MCF 10A (cell line): ENCODE measurements at regions of chr2 and their contacts with region 1.

Region 1: DNA sequence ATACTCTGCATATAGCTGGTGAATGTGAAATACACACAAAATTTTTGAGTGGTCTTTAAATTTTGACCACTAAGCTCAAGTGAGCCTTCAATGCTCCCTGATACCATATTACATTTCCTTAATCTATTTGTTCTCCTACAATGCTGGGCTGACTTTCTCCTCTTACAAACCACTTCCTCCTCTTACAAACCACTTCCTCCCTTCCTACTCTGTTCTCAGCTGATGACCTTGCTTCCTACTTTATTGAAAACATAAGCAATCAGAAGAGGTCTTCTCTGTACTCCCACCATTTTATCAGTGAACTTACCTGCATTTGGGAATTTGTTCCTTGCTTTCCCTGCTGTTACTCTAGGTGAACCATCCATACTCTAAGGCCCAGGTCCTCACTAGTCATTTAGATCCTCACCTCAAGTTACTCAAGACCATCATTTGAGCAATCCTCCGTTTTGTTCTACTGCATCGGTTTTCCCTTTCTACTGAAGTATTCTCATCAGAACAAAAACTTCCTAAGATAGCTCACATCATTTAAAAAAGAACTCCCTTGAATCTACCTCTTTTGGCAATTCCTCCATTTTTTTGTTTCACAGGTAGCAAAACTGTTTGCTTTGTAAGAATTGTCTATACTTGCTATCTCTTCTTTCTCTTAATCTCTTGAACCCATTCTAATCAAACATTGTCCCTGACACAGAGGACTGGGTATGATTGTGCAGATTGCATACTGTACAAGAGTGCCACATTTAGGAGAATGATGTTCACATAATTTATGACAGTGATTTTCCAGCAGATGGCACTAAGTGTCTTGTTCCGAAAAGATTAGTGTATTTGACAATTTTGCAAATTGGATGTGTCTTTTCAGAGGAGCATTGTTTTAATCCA is 96.5 kb downstream of the EPB41L5 start:
- DNase-seq: peak; percentile 65
- H3K4me3 Mint-ChIP-seq: peak overlapping the region; percentile 34
- H3K27ac Mint-ChIP-seq: peak overlapping the region; percentile 28
- H3K4me1 Mint-ChIP-seq: peaks cover 44% of the 10 kb centered on the region
- H3K27me3 Mint-ChIP-seq: no peaks in the 10 kb centered on the region
- CTCF ChIP-seq: peak; percentile 64

Region 2: DNA sequence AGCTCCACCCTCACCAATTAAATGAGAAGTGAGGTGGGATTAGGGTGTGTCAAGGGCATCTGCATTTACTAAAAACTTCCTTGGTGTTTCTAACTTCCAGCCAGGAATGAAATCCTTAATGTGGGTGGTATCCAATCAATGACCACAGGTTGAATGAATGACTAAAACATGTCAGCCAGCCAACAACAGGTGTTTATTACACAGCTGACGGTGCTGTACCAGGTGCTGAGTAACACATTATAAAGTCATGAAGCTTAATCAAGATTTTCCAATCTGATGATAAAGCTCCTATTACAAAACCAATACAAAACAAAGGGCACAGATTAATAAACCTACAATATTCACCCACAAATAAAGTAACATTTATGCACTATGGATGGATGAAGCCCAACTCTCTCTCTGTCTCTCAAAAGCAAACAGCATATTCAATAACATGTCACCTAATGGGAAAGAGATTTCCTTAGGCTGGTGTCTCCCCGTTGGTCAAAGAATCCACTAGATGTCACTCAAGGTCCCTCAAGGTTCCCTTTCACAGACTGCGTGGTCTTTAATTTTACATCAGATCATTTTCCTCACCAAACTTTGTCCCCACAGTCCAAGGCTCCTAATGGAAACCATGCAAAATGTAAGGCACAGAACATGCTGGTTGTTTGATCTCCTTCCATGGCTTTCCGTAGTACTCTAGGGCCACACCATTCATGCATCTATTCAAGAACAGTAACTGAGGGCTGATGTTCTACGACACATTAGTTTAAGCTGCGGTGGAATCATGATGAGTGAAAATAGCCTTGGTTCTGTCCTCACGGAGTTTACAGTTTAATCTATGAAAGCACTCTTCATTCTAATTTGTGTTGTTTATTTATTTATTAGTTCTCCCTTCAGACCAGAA is 356.1 kb before region 1 on chr2:
- CTCF ChIA-PET with region 1: interaction called, 13 read pairs
- POLR2A ChIA-PET with region 1: interaction called, 7 read pairs
- intact Hi-C with region 1: loop called (anchors 1 kb)
- DNase-seq: peak; percentile 61
- H3K4me3 Mint-ChIP-seq: no peak overlapping the region
- H3K27ac Mint-ChIP-seq: no peak overlapping the region
- H3K4me1 Mint-ChIP-seq: peaks cover 56% of the 10 kb centered on the region
- H3K27me3 Mint-ChIP-seq: no peaks in the 10 kb centered on the region
- CTCF ChIP-seq: peak; percentile 47

Region 3: DNA sequence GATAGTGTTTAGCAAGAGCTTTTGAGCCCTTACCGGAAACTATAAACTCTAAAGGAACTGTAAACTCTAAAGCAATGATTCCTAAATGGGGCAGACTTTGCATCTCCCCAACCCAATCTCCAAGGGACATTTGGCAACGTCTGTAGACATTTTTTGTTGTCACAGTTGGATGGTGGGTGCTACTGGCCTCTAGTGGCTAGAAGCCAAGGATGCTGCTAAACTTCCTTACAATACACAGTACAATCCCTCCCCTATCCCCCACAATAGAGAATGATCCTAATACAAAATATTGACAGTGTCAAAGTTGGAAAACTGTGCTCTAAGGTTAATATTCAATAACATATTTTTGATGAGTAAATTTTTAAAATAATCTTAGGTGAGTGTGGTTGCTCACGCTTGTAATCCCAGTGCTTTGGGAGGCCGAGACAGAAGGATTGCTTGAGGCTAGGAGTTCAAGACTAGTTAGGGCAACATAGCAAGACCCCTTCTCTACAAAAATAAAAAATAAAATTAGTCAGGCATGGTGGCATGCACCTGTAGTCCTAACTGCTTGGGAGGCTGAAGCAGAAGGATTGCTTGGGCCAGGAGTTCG is 283.0 kb before region 1 on chr2:
- CTCF ChIA-PET with region 1: no interaction called
- POLR2A ChIA-PET with region 1: no interaction called
- intact Hi-C with region 1: no loop called
- DNase-seq: peak; percentile 51
- H3K4me3 Mint-ChIP-seq: no peak overlapping the region
- H3K27ac Mint-ChIP-seq: no peak overlapping the region
- H3K4me1 Mint-ChIP-seq: peaks cover 18% of the 10 kb centered on the region
- H3K27me3 Mint-ChIP-seq: no peaks in the 10 kb centered on the region
- CTCF ChIP-seq: peak; percentile 50

Region 4: GRCh38 chr2:119921825-119922224 is 187.6 kb before region 1 on chr2:
- CTCF ChIA-PET with region 1: no interaction called
- POLR2A ChIA-PET with region 1: no interaction called
- intact Hi-C with region 1: no loop called
- DNase-seq: no peak
- H3K4me3 Mint-ChIP-seq: no peak overlapping the region
- H3K27ac Mint-ChIP-seq: no peak overlapping the region
- H3K4me1 Mint-ChIP-seq: no peaks in the 10 kb centered on the region
- H3K27me3 Mint-ChIP-seq: no peaks in the 10 kb centered on the region
- CTCF ChIP-seq: no peak

Region 5: GRCh38 chr2:120012771-120013596 is 96.4 kb before region 1 on chr2 and contains the start of gene EPB41L5:
- CTCF ChIA-PET with region 1: no interaction called
- POLR2A ChIA-PET with region 1: interaction called, 14 read pairs
- intact Hi-C with region 1: loop called (anchors 5 kb)
- DNase-seq: peak; percentile 96
- H3K4me3 Mint-ChIP-seq: peak within 1 kb of the TSS; percentile 66
- H3K27ac Mint-ChIP-seq: peak within 1 kb of the TSS; percentile 54
- H3K4me1 Mint-ChIP-seq: peaks cover 26% of the 10 kb centered on the region
- H3K27me3 Mint-ChIP-seq: no peaks in the 10 kb centered on the region
- CTCF ChIP-seq: no peak
- total RNA-seq, gene EPB41L5: 19.0 and 22.8 TPM in 2 replicates

Region 6: DNA sequence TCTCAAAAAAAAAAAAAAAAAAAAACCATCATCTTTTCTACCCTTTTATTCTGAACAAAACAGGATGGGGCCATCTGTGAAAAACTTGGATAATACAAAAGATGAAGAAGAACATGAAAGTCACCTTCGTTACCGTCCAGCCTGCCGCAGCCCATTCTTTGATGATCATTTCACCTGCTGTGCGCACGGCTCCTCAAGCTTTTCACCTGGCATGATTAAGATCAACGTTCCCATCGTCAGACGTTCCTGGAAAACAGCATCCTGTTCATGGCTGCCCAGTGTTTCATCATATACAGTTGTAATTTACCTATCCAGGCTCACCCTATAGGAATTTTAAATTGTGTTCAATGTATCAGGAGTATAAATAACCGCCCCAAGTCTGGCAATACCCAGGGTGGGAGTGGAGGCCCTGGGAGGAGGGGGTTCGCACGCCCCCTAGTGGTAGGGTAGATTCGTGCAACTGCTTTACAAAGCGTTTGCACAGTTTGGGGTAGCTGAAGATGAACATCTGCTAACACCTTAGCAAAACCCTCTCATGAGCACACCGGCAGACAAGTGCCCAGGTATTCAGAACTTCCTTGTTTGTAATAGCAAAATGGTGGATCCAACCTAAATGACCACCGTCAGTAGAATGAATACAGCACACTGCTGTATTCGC is 577.2 kb after region 1 on chr2:
- CTCF ChIA-PET with region 1: interaction called, 10 read pairs
- POLR2A ChIA-PET with region 1: no interaction called
- intact Hi-C with region 1: loop called (anchors 5 kb)
- DNase-seq: no peak
- H3K4me3 Mint-ChIP-seq: no peak overlapping the region
- H3K27ac Mint-ChIP-seq: no peak overlapping the region
- H3K4me1 Mint-ChIP-seq: peaks cover 10% of the 10 kb centered on the region
- H3K27me3 Mint-ChIP-seq: peaks cover 18% of the 10 kb centered on the region
- CTCF ChIP-seq: peak; percentile 53